ENCODE measurements at regions of chrX and their contacts with region 1.

Region 1: DNA sequence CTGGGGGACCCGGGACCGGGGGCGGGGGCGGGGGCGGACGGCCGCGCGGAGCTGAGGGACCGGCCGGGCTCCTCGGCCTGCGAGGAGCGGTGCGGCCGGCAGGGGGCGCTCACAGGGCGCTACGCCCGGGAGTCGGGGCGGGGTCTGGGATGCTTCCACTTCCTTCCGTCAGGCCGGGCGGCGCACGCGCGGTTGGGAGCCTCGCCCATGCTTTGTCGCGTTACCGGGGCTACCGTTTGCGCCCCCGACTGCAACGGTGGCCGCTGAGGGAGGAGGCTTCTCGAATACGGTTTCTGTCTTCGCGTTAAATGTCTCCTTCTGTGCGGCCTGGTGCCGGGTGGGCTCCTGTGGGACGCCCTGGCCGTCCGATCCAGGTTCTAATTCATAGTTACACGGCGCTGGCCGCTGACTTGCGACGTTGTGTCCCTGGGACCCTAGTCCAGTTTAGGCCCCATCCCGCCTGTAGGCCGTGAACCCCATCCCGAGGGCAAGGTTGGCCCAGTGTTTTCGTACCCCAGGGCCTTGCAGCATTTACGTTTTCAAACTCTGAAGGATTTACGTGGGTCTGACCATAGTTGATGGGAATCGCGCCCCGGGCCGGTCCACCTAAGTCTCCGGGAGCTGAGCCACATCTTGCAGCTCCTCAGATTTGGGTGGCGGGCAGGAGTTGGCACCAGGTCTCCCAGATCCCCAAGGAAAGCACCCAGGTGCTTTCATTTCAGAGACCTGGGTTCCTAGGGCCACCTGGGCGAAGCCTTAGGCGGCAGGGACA is 549 bp downstream of the MSL3 start:
- DNase-seq: peak; percentile 89
- H3K4me3 Mint-ChIP-seq: peak overlapping the region; percentile 94
- H3K27ac Mint-ChIP-seq: peak overlapping the region; percentile 100
- H3K4me1 Mint-ChIP-seq: peaks cover 20% of the 10 kb centered on the region
- H3K27me3 Mint-ChIP-seq: no peaks in the 10 kb centered on the region

Region 2: DNA sequence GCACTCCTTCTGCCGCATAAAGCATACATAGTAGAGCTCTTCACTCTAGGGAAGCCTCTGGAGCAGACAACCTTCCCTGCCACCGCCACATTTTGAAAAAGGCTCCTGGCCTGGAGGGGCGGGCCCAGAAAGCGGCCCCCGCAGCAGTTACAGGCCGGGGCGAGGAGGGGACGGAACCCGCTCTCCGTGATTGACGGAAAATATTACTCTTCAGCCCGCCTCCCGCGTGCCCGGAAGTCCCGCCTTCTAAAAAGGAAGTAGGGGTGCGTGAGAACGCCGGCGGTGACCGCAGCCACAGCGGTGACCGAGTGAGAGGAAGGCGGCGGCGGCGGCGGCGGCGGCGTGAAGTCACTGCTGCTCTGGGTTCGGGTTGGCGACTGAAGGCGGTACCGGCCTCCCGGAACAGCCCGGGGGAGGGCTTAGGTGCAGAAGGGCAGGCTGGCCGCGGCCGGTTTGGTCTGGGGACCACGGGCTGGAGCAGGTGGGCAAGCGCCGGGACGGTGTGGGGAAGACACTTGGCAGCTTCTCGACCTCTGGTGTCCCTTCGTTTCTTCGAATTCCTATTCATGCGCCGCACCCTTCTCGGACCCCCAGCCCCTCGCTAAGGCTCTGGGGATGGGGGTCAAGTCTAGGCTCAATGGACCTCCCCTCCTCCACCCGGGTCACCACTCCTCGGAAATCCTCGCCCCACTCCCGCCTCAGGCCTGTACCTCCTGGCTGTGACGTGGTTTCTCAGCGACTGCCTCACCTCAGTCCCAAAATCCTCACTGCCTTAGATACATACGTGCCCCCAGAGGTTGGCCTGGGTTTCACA is 647.3 kb before region 1 on chrX and contains the start of gene HCCS:
- CTCF ChIA-PET with region 1: no interaction called
- intact Hi-C with region 1: loop called (anchors 1 kb)
- DNase-seq: peak; percentile 88
- H3K4me3 Mint-ChIP-seq: no peak within 1 kb of the TSS
- H3K27ac Mint-ChIP-seq: peak within 1 kb of the TSS; percentile 93
- H3K4me1 Mint-ChIP-seq: peaks cover 19% of the 10 kb centered on the region
- H3K27me3 Mint-ChIP-seq: no peaks in the 10 kb centered on the region
- total RNA-seq, gene HCCS: 19.2 to 19.5 TPM

Region 3: DNA sequence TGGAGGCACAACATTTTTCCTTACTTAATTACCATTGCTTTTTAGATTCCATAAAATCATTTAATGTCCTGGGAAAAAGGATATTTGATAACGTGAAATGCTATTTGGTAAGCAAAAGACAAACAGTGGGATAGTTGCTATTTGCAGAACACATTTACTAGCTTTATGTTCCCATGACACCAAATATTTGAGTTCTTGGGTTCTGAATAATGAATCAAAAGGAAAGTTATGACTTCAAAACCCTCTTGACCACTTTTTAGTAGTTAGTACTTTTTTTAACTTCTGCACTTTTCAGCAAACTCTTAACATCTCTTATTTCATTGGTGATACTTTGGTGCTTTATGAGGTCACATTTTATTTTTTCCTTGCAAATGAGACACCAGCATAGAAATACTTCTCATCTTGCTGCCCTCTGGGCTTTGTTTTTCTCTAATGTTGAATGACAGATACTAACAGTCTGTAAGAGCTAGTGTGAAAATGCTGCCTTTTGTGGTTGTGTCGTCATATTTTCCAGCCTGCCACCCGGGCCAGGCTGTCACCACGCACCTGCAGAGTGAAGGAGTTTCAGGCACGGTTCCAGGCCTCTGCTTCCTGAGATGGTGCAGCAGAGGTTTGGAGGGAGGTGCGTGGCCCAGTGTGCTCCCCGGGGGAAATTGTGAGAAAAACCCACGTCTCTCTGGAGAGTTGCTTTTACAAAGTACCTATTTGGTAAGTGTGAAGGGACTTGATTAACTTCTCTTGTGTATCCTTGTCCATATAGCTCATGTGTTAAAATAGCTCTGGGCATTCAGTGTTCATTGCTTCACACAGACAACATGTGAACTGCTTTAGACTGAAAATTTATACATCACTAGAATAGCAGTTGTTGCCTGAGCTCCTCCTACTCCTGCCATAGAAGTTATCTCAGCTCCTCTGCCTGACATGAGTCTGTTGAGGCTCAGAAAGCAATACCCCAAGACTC is 34.2 kb after region 1 on chrX:
- CTCF ChIA-PET with region 1: no interaction called
- intact Hi-C with region 1: loop called (anchors 1 kb)
- DNase-seq: peak; percentile 84
- H3K4me3 Mint-ChIP-seq: peak overlapping the region; percentile 11
- H3K27ac Mint-ChIP-seq: peak overlapping the region; percentile 85
- H3K4me1 Mint-ChIP-seq: peaks cover 44% of the 10 kb centered on the region
- H3K27me3 Mint-ChIP-seq: no peaks in the 10 kb centered on the region

Region 4: DNA sequence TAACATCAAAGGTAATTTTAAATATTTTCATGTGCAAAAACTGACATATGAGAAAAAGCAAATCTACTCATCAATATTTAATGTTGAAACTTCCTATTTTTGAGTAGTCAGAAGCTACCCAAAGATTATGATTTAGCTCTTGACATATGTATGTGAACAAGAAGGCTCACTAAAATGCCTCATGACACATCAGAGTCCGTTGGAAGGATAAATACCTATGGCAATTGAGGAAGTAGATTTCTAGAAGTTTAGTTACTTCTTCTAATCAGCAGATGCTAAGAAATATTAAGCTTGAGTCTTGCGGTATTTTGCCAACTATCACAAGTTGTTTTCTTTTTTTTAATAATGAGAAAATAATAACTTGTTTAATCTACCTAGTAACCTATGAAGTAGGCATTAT is 54.8 kb after region 1 on chrX:
- CTCF ChIA-PET with region 1: no interaction called
- intact Hi-C with region 1: no loop called
- DNase-seq: no peak
- H3K4me3 Mint-ChIP-seq: no peak overlapping the region
- H3K27ac Mint-ChIP-seq: no peak overlapping the region
- H3K4me1 Mint-ChIP-seq: no peaks in the 10 kb centered on the region
- H3K27me3 Mint-ChIP-seq: no peaks in the 10 kb centered on the region

Region 5: DNA sequence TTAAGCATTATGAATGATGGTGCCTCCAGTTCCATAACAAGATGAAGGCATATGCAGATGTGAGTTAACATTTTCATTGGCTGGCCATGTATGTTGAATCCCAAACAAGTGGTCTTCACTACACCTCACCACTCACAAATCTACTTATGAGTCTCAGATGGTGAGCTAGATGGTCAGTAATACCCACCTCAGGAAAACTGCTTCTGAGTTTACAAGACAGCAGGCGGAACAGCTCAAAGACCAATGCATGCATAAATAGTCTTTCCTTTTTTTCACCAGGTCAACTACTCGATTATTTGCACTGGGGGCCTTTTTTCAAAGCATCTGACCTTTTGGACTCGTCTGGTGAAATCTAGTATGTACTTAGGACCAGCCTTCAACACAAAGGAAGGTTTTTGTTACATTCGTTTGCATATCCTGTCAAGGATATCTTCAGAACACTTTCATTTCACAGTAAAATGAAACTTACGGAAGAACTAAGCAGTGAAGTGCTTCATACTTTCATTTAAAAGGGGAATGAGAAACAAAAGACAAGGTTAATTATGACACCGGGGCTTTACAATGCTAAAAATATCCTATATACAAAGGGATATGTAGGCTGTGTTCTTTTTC is 1085.2 kb after region 1 on chrX:
- CTCF ChIA-PET with region 1: no interaction called
- intact Hi-C with region 1: loop called (anchors 1 kb)
- DNase-seq: no peak
- H3K4me3 Mint-ChIP-seq: peak overlapping the region; percentile 65
- H3K27ac Mint-ChIP-seq: peak overlapping the region; percentile 93
- H3K4me1 Mint-ChIP-seq: peaks cover 17% of the 10 kb centered on the region
- H3K27me3 Mint-ChIP-seq: no peaks in the 10 kb centered on the region